ENCODE measurements at regions of chr6 and their contacts with region 1.

Region 1: GRCh38 chr6:36116066-36116864 is 14.0 kb upstream of the MAPK13 start:
- DNase-seq: no peak
- ATAC-seq: no peak
- H3K4me3 ChIP-seq: no peak overlapping the region
- H3K27ac ChIP-seq: no peak overlapping the region
- H3K4me1 ChIP-seq: peaks cover 6% of the 10 kb centered on the region
- H3K27me3 ChIP-seq: no peaks in the 10 kb centered on the region
- CTCF ChIP-seq: no peak

Region 2: DNA sequence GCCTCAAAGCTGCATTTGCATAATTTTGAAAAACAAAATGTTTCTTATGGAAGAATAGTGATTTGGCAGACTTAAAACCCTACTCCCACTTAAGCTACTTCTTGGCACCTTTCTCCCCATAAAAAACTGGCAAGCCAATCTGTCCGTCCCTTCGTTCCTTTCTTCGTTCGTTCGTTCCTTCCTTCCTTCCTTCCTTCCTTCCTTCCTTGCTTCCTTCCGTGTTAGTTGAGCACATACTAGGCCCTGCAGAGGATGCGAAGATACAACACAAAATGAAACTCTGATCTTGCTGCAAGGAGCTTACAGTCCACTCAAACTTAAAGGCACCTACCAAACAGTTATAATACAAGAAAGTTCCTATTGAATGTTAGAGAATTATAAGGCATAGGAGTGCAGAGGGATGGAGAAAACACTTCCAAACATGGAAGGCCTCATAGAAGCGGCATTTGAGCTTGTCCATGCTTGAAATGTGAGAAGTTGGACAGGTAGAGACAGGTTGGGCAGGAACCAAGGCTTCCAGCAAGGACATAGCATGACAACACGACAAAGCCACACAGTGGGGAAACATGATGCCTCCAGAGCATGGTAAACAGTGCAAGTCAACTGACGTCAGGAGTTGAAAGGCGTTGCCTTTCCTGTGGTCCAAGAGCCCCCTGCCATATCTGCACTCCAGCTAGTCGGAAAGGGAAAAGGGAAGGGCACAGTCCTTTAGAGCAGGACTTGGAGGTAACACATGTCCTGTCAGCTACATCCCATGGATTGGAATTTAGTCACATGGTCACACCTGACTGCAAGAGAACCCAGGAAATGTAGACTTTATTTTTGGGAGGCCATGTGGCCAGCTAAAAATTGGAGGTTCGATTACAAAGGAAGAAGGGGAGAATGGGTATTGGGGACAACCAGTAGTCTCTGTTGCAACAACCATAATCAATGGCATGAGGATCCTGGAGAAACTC is 160.6 kb after region 1 on chr6:
- CTCF ChIA-PET with region 1: no interaction called
- POLR2A ChIA-PET with region 1: interaction called, 11 read pairs
- in situ Hi-C with region 1: no loop called
- intact Hi-C with region 1: no loop called
- DNase-seq: no peak
- ATAC-seq: no peak
- H3K4me3 ChIP-seq: no peak overlapping the region
- H3K27ac ChIP-seq: no peak overlapping the region
- H3K4me1 ChIP-seq: no peaks in the 10 kb centered on the region
- H3K27me3 ChIP-seq: peaks cover 20% of the 10 kb centered on the region
- CTCF ChIP-seq: no peak